ENCODE measurements at regions of chr7 and their contacts with region 1.

Region 1: DNA sequence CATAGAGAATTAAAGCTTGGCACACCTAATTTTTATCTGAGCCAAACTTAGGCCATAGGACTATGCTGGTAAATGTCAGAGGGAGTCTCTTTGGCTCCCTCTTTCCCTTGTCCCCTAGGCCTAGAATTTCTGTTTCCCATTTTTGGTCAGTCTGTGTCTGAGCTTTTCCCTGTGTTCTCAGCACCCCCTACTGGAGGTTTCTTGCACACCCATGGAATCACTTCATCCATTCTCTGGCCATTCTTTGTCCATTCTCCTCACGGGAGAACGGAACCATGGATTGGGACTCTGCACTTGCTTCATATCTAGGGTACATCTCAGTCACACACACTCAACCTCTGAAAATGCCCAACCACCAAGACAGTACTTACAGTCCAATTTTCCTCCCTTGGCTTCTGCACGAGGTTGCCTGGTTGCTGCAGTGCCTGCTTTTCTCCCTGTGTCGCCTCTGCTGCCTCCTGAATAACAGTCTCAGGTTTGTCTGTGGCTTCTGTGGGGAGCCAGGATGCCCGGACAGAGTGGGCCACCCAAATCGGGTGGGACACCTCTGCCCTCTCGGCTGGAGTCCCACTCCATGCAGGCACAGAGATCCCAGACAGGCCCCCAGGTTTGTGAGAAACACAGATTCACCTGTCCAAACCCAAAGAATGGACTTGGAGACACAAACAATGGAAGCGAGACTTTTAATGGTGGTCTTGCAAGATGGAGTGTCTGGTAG is 35.1 kb upstream of the DNAH11 start:
- DNase-seq: peak in 36 of 42 donors; percentile 9 to 86 (median 57)

Region 2: GRCh38 chr7:21253740-21254687 is 253.8 kb before region 1 on chr7:
- intact Hi-C with region 1: loop called (anchors 10 kb)
- DNase-seq: peak; percentile 5 to 85 (median 66)

Region 3: GRCh38 chr7:22402250-22402649 is 894.5 kb after region 1 on chr7:
- intact Hi-C with region 1: no loop called
- DNase-seq: no peak